Dorsolateral prefrontal cortex (tissue), 120 donors: ENCODE measurements at regions of chr10 and their contacts with region 1.

Region 1: GRCh38 chr10:92592761-92593618 is at the start of gene KIF11:
- DNase-seq: peak; percentile 96 to 99 (median 98)
- H3K4me3 ChIP-seq: peak within 1 kb of the TSS; percentile 50 to 100 (median 81)
- H3K27ac ChIP-seq: peak within 1 kb of the TSS; percentile 65 to 98 (median 95)
- H3K27me3 ChIP-seq: no peaks in the 10 kb centered on the region
- CTCF ChIP-seq: peak in 32 of 56 donors; percentile 6 to 59 (median 30)
- total RNA-seq, gene KIF11: 0.77 to 2.4 (median 1.5) TPM

Region 2: GRCh38 chr10:91923371-91924211 is 669.4 kb before region 1 on chr10 and contains the start of gene BTAF1:
- intact Hi-C with region 1: loop called in 1 of 2 experiments (anchors 10 kb)
- DNase-seq: peak; percentile 89 to 97 (median 94)
- H3K4me3 ChIP-seq: peak within 1 kb of the TSS; percentile 39 to 100 (median 91)
- H3K27ac ChIP-seq: peak within 1 kb of the TSS; percentile 56 to 99 (median 93)
- H3K27me3 ChIP-seq: no peaks in the 10 kb centered on the region
- CTCF ChIP-seq: peak in 33 of 56 donors; percentile 13 to 55 (median 31)
- total RNA-seq, gene BTAF1: 28.2 to 65.3 (median 40.9) TPM

Region 3: GRCh38 chr10:92184977-92185376 is 408.0 kb before region 1 on chr10:
- intact Hi-C with region 1: no loop called
- DNase-seq: no peak
- H3K4me3 ChIP-seq: no peak overlapping the region
- H3K27ac ChIP-seq: no peak overlapping the region
- H3K27me3 ChIP-seq: no peaks in the 10 kb centered on the region
- CTCF ChIP-seq: no peak

Region 4: DNA sequence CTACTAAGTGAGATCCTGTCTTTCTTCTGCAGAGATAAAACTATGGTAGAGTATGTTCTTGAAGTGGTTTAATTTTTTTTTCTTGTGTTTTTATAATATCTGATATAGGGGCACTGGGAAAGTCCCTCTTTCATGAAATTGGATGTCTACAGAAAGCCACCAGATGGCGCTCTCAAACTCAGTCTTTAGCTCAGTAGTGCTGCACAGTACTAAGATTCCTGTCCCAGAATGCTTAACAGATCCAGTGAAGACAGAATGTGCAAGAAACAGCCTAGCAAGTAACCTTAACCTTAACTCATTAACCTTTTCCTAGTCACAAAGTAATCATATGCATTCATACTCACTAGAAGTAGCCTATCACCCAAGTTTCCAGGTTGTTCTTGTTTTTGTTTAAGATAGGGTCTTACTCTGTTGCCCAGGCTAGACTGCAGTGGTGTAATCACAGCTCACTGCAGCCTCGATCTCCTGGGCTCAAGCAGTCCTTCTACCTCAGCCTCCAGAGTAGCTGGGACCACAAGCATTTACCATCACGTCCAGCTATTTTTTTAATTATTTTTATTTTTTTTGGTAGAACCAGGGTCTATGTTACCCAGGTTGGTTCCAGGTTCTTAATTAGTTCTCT is 75.8 kb before region 1 on chr10:
- intact Hi-C with region 1: loop called in 1 of 2 experiments (anchors 5 kb)
- DNase-seq: peak in 6 of 10 donors; percentile 32 to 75 (median 58)
- H3K4me3 ChIP-seq: peak overlapping the region in 3 of 59 donors; percentile 4 to 38 (median 9)
- H3K27ac ChIP-seq: no peak overlapping the region
- H3K27me3 ChIP-seq: no peaks in the 10 kb centered on the region
- CTCF ChIP-seq: peak; percentile 73 to 93 (median 84)

Region 5: DNA sequence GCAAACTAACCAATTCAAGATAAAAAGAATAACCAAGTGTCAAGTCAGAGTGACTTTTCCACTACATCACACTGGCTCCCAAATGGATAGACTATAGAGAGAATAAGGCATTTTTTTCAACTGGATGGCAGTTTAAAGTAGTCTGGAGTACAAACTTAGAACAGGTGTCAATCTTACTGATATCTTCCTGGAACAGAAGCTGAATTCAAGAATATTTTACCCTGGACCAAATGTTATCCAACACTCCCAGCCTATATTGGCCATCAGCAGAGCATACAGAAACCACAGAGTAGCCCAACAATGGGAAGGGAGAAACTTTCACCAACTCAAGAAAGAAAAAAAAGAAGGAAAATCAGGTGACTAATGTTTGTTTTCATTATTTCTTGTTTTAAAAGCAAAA is 30.6 kb before region 1 on chr10:
- intact Hi-C with region 1: no loop called
- DNase-seq: no peak
- H3K4me3 ChIP-seq: no peak overlapping the region
- H3K27ac ChIP-seq: no peak overlapping the region
- H3K27me3 ChIP-seq: no peaks in the 10 kb centered on the region
- CTCF ChIP-seq: no peak

Region 6: GRCh38 chr10:92848441-92849233 is 255.6 kb after region 1 on chr10 and contains the start of gene EXOC6:
- intact Hi-C with region 1: loop called (anchors 5 to 10 kb)
- DNase-seq: peak; percentile 43 to 85 (median 72)
- H3K4me3 ChIP-seq: peak within 1 kb of the TSS; percentile 79 to 100 (median 96)
- H3K27ac ChIP-seq: peak within 1 kb of the TSS in 57 of 59 donors; percentile 13 to 96 (median 86)
- H3K27me3 ChIP-seq: no peaks in the 10 kb centered on the region
- CTCF ChIP-seq: peak in 16 of 56 donors; percentile 5 to 30 (median 11)
- total RNA-seq, gene EXOC6: 14.7 to 38.5 (median 27.0) TPM

Region 7: DNA sequence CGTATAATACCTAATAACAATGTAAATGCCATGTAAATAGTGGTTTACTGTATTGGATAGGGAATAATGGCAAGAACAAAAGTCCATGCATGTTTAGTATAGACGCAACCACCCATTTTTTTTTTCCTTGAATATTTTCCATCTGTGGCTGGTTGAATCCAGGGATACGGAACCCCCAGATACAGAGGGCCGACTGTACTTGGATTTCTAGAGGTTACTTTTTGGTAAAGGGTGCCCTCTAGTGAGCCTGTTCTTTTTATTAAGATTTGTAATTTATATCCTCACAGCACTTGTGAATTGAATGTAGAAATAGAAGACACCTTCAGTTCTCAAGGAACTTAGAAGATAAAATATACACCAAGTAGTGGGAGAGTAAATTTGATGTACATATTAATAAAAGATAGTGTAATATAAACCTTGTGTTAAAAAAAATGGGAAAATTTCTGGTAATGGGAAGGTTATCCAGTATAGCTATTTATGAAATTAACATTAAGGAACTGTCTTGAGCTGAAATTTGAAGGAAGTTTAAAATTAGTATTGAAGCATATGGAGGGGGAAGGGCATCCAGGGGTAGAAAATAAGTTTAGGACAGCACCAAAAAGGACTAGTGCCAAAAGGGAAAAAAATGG is 287.4 kb after region 1 on chr10:
- intact Hi-C with region 1: loop called in 1 of 2 experiments (anchors 10 kb)
- DNase-seq: peak in 2 of 10 donors; percentile 23 to 25
- H3K4me3 ChIP-seq: peak overlapping the region in 12 of 59 donors; percentile 10 to 44 (median 24)
- H3K27ac ChIP-seq: peak overlapping the region in 1 of 59 donors; percentile 30
- H3K27me3 ChIP-seq: no peaks in the 10 kb centered on the region
- CTCF ChIP-seq: peak; percentile 29 to 85 (median 67)